BJ (cell line): ENCODE measurements at regions of chr1 and their contacts with region 1.

Region 1: GRCh38 chr1:160951443-160952128 is 3.0 kb downstream of the ITLN2 start:
- DNase-seq: no peak
- H3K4me3 ChIP-seq: no peak overlapping the region
- H3K27me3 ChIP-seq: no peaks in the 10 kb centered on the region
- CTCF ChIP-seq: peak; percentile 71

Region 2: DNA sequence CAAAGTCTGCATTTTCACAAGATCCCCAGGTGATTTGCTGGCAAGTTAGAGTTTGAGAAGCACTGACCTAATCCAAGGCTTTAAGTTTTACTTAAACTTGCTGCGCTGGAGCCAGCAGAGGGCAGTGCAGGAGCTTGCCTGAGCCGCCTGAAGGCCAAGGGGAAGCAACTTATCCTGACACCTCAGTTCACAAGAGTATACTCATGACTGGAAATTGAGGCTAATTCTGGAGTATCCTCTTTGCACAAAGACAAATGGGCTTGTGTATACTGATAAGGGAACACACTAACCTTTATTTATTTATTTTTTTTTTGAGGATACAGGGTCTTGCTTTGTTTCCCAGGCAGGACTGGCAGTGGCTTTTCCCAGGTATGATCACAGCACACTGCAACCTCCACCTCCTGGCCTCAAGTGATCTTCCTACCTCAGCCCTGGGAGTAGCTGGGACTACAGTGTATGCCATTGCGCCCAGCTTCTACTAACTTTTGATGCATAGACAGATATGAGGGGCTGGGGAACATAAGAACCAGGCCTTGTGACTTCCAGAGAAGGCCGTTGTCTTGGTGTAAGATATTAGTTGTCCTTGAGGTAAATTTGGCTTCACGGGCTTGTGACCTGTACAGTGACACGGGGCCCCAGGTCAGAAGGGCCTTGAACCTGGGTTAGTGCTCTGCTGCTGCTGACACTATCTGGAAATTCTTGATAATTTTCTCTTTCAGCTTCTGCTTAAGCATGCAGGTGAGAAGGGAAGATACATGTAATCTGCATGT is 275.8 kb before region 1 on chr1:
- CTCF ChIA-PET with region 1: interaction called, 19 read pairs
- POLR2A ChIA-PET with region 1: no interaction called
- DNase-seq: no peak
- H3K4me3 ChIP-seq: no peak overlapping the region
- H3K27me3 ChIP-seq: peaks cover 1% of the 10 kb centered on the region; the same call in 1 of the 2 replicates
- CTCF ChIP-seq: peak; percentile 89

Region 3: GRCh38 chr1:160726498-160727315 is 224.9 kb before region 1 on chr1:
- CTCF ChIA-PET with region 1: interaction called, 40 read pairs
- POLR2A ChIA-PET with region 1: no interaction called
- DNase-seq: no peak
- H3K4me3 ChIP-seq: no peak overlapping the region
- H3K27me3 ChIP-seq: no peaks in the 10 kb centered on the region
- CTCF ChIP-seq: peak; percentile 72

Region 4: DNA sequence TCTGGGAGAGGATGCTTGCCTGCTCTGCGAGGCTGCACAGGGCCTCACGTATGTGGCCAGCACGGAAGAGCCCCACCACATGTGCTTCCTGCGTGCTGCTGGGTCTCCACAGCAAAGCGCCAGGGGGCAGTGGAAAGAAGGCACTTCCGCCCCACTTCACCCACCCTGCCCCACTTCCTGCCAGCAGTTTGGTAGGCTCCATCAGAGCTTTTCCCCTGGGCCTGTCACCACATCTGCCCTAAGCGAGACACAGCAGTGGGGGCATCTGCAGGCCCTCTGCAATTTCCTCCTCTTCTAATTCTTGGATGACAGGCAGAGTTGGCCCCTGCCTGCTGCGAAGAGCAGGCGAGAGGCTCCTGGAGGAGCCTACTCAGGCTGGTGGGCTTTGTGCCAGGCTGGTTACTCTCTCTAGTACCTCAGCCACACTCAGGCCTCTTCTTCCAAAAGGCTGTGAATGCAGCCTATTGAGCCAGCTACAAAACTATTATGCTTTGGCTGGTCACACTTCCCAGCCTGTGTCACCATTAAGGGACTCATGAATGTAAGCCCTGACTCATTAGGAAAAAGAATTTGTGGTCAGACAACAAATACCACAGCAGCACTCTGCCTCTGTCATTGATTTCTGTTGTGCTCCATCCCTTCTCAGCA is 113.9 kb before region 1 on chr1:
- CTCF ChIA-PET with region 1: interaction called, 32 read pairs
- POLR2A ChIA-PET with region 1: no interaction called
- DNase-seq: no peak
- H3K4me3 ChIP-seq: no peak overlapping the region
- H3K27me3 ChIP-seq: no peaks in the 10 kb centered on the region; the same call in 1 of the 2 replicates
- CTCF ChIP-seq: no peak

Region 5: DNA sequence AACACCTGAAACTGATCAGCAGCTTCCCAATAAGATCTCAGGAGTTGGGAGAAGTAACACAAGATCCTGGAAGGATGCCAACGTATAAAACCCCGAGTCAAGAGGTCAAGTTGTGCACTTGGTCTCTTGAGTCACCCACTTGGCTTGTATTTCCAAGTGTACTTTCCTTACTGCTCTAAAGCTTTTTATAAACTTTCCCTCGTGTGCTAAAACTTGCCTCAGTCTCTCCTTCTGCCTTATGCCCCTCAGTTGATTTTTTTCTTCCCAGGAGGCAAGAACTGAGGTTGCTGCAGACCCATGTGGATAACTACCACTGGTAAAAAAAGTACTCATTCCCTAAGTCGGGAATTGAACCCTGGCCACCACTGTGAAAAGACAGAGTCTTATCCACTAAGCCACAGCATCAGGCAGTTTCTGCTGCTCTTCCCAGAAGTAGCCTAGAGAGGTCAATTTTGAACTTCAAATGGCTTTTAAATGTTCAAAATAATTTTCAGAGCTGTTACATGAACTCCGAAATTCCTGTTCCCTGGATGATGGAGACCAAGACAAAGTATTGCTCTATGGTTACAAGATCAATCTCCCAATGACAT is 25.8 kb before region 1 on chr1:
- CTCF ChIA-PET with region 1: interaction called, 17 read pairs
- POLR2A ChIA-PET with region 1: no interaction called
- DNase-seq: no peak
- H3K4me3 ChIP-seq: no peak overlapping the region
- H3K27me3 ChIP-seq: no peaks in the 10 kb centered on the region
- CTCF ChIP-seq: no peak

Region 6: DNA sequence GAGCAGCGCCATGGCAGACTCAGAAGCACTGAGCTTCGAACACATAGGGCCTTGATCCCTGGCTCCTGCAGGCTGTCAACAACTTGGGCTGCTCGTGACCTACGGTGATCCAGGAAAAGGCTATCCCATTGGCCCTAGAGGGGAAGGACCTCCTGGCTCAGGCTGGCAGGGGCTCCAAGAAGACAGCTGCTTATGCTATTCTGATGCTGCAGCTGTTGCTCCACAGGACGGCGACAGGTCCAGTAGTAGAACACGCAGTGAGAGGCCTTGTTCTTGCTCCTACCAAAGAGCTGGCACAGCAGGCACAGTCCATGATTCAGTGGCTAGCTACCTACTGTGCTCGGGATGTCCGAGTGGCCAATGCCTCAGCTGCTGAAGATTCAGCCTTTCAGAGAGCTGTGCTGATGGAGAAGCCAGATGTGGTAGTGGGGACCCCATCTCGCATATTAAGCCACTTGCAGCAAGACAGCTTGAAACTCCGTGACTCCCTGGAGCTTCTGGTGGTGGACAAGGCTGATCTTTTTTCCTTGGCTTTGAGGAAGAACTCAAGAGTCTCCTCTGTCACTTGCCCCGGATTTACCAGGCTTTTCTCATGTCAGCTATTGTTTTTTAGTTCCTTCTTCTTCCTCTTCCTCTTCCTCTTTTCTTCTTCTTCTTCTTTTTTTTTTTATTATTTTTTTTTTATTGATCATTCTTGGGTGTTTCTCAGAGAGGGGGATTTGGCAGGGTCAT is 15.9 kb before region 1 on chr1:
- CTCF ChIA-PET with region 1: interaction called, 29 read pairs
- POLR2A ChIA-PET with region 1: no interaction called
- DNase-seq: no peak
- H3K4me3 ChIP-seq: no peak overlapping the region
- H3K27me3 ChIP-seq: no peaks in the 10 kb centered on the region
- CTCF ChIP-seq: no peak

Region 7: GRCh38 chr1:160997323-160998038 is 45.9 kb after region 1 on chr1:
- CTCF ChIA-PET with region 1: interaction called, 11 read pairs
- POLR2A ChIA-PET with region 1: no interaction called
- DNase-seq: no peak
- H3K4me3 ChIP-seq: no peak overlapping the region
- H3K27me3 ChIP-seq: no peaks in the 10 kb centered on the region; the same call in 1 of the 2 replicates
- CTCF ChIP-seq: peak; percentile 78

Region 8: GRCh38 chr1:162081316-162081715 is 1129.7 kb after region 1 on chr1:
- CTCF ChIA-PET with region 1: no interaction called
- POLR2A ChIA-PET with region 1: no interaction called
- DNase-seq: no peak
- H3K4me3 ChIP-seq: no peak overlapping the region
- H3K27me3 ChIP-seq: no peaks in the 10 kb centered on the region
- CTCF ChIP-seq: no peak